Thyroid gland (tissue), 4 donors: ENCODE measurements at regions of chr6 and their contacts with region 1.

Region 1: DNA sequence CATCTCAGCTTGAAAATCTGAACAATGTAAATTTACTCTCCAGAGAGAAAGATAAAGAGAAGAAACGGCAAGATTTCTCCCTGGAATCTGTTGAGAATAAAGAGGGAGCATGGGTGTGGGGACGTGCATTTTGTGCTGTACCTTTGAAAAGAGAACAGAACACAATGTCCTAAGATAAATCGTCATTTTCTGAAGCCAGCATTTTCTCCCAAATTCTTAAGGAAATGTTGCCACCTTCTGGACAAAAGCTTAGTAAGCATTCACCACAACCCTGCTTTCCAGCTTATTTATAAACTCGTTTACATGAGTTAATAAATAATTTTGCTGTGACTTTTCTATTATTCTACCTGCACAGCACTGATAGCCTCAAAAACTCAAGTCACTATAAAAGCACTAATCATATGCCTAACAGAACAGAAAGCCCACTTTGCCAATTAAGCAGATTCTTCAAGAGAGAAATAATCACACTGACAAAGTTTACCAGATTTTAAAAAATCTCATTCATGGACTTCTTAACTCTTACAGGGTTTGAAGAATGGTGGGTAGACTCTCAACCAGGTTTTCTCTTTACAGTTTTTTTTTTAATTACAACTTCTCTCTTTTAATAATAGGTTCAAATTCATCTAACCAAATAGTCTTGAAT is 155.8 kb downstream of the MBOAT1 start:
- DNase-seq: peak; percentile 55 to 56
- H3K4me3 ChIP-seq: no peak overlapping the region
- H3K27ac ChIP-seq: peak overlapping the region; percentile 38 to 70 (median 67)
- H3K4me1 ChIP-seq: peaks cover 10 to 14% of the 10 kb centered on the region in 2 donors
- H3K27me3 ChIP-seq: no peaks in the 10 kb centered on the region
- CTCF ChIP-seq: peak in 4 of 6 experiments; percentile 58 to 90 (median 72)
- POLR2A ChIP-seq: peak in 1 of 2 donors; percentile 51

Region 2: GRCh38 chr6:18752278-18753068 is 1304.0 kb before region 1 on chr6:
- intact Hi-C with region 1: loop called (anchors 10 kb)
- DNase-seq: no peak
- H3K4me3 ChIP-seq: no peak overlapping the region
- H3K27ac ChIP-seq: no peak overlapping the region
- H3K4me1 ChIP-seq: peaks cover 4 to 5% of the 10 kb centered on the region in 2 donors
- H3K27me3 ChIP-seq: no peaks in the 10 kb centered on the region
- CTCF ChIP-seq: no peak
- POLR2A ChIP-seq: no peak

Region 3: DNA sequence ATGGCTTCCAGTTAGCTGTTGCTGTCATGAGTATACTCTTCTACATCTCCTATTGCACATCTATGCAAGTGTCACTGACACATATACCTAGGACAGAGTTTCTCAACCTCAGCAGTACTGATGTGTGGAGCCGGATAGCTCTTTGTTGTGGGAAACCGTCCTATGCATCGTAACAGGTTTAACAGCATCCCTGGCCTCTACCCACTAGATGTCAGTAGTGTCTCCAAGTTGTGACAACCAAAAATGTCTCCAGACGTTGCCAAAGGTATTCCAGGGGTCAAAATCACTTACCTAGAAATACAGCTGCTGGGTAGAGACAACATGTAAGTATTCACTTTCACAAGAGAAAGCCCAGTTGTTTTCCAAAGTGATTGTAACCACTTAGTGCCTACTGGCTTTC is 1031.7 kb before region 1 on chr6:
- intact Hi-C with region 1: loop called (anchors 10 kb)
- DNase-seq: peak; percentile 53 to 60
- H3K4me3 ChIP-seq: no peak overlapping the region
- H3K27ac ChIP-seq: no peak overlapping the region
- H3K4me1 ChIP-seq: no peaks in the 10 kb centered on the region
- H3K27me3 ChIP-seq: no peaks in the 10 kb centered on the region
- CTCF ChIP-seq: peak in 5 of 6 experiments; percentile 42 to 84 (median 70)
- POLR2A ChIP-seq: no peak

Region 4: DNA sequence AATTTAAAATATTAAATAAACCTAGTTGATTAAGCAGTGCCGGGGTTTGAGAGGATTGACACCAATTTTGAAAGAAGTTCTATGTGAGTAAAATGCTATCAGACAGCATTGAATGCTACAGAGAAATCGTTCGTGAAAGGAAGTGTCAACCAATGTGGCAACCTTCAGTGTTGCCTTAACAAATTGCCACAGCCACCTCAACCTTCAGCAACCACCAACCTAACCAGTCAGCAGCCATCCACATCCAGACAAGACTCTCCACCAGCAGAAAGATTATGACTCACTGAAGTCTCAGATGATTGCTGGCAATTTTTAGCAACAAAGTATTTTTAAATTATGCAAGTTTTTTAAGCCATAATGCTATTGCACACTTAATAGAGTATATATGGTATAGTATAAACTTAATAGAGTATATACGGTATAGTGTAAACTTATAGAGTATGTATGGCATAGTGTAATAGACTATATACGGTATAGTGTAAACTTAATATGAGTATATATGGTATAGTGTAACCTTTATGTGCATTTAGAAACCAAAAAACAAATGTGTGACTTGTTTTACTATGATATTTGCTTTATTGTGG is 284.6 kb before region 1 on chr6:
- intact Hi-C with region 1: no loop called
- DNase-seq: no peak
- H3K4me3 ChIP-seq: no peak overlapping the region
- H3K27ac ChIP-seq: no peak overlapping the region
- H3K4me1 ChIP-seq: no peaks in the 10 kb centered on the region
- H3K27me3 ChIP-seq: no peaks in the 10 kb centered on the region
- CTCF ChIP-seq: no peak
- POLR2A ChIP-seq: no peak